MCF 10A (cell line): ENCODE measurements at regions of chr9 and their contacts with region 1.

Region 1: DNA sequence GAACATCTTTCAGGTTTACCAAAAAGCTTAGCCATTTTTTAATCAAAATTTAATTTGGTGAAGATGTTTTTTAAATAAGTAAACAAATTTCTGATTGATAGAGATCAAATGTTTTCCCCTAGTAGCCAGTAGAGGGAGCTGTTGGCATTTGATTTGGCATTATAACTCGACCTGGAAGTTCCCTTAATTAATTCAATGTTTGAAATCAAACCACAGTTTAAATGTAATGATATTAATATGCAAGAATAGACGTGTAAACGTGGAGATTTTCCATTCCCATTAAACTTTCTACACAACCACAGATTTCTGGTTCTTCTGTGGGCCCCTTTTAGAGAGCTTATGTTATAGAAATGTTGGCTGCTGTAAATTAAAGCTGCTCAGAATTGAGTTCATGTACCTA is 148.1 kb upstream of the MPDZ start:
- DNase-seq: peak; percentile 67
- H3K4me3 Mint-ChIP-seq: no peak overlapping the region
- H3K27ac Mint-ChIP-seq: no peak overlapping the region
- H3K4me1 Mint-ChIP-seq: no peaks in the 10 kb centered on the region
- H3K27me3 Mint-ChIP-seq: no peaks in the 10 kb centered on the region
- CTCF ChIP-seq: peak; percentile 69

Region 2: DNA sequence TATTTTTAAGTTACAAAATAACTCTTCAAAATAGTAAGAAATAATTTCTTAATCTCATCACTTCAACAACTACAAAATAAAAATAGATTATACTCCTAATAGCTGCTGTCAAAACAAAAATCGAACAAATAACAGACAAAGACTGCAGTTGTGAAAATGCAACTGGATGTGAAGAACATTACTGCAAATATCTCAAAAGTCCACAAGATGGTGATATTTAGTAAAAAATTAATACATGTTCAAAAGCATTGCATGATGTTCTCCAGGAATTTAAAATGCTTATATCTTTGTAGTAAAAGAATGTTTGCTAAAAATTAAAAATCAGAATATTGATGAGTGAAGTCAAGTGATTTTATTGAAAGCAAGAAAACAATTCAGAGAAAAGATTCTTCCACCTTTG is 214.2 kb before region 1 on chr9:
- CTCF ChIA-PET with region 1: no interaction called
- POLR2A ChIA-PET with region 1: no interaction called
- intact Hi-C with region 1: loop called (anchors 5 kb)
- DNase-seq: peak; percentile 5
- H3K4me3 Mint-ChIP-seq: no peak overlapping the region
- H3K27ac Mint-ChIP-seq: no peak overlapping the region
- H3K4me1 Mint-ChIP-seq: no peaks in the 10 kb centered on the region
- H3K27me3 Mint-ChIP-seq: no peaks in the 10 kb centered on the region
- CTCF ChIP-seq: peak; percentile 36

Region 3: GRCh38 chr9:13437866-13438265 is 10.3 kb after region 1 on chr9:
- CTCF ChIA-PET with region 1: interaction called, 35 read pairs
- POLR2A ChIA-PET with region 1: interaction called, 4 read pairs
- intact Hi-C with region 1: no loop called
- DNase-seq: no peak
- H3K4me3 Mint-ChIP-seq: no peak overlapping the region
- H3K27ac Mint-ChIP-seq: no peak overlapping the region
- H3K4me1 Mint-ChIP-seq: no peaks in the 10 kb centered on the region
- H3K27me3 Mint-ChIP-seq: no peaks in the 10 kb centered on the region
- CTCF ChIP-seq: no peak

Region 4: GRCh38 chr9:13586587-13587374 is 159.2 kb after region 1 on chr9:
- CTCF ChIA-PET with region 1: no interaction called
- POLR2A ChIA-PET with region 1: no interaction called
- intact Hi-C with region 1: no loop called
- DNase-seq: no peak
- H3K4me3 Mint-ChIP-seq: no peak overlapping the region
- H3K27ac Mint-ChIP-seq: no peak overlapping the region
- H3K4me1 Mint-ChIP-seq: no peaks in the 10 kb centered on the region
- H3K27me3 Mint-ChIP-seq: no peaks in the 10 kb centered on the region
- CTCF ChIP-seq: no peak

Region 5: DNA sequence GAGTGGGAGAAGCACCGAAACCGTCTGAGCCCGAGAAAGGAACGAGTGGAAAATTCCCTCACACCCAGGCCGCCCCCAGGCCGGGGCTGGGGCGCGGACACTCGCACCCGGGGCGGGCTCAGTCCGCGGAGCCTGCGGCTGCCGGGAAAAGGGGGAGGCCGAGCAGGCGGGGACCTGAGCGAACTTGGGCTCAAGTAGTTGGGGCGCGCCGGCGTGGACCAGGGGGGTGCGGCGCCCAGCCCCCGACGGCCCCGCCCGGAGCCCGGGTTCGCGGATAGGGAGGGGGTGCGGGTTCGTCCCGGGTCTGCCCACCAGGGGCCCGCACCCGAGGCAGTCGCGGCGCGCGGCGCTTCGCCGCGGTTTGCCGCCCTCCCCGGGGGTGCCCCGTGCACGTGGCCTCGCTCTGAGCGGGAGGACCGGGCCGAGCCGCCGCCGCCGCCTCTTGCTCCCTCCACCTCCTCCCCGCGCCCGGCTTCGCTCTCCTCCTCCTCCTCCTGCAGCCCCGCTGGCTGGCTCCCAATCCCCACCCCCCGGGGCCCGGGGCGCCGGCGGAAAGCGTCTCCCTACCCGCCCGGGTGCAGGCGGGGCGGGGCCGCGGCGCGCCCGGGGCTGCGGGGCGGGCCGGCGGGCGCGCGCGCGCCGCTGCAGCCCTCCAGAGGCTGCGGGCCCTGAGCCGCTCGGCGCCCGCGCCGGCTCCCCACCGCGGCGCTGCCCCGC is 887.5 kb after region 1 on chr9:
- CTCF ChIA-PET with region 1: interaction called, 4 read pairs
- POLR2A ChIA-PET with region 1: interaction called, 10 read pairs
- intact Hi-C with region 1: no loop called
- DNase-seq: peak; percentile 93
- H3K4me3 Mint-ChIP-seq: peak overlapping the region; percentile 80
- H3K27ac Mint-ChIP-seq: peak overlapping the region; percentile 88
- H3K4me1 Mint-ChIP-seq: peaks cover 40% of the 10 kb centered on the region
- H3K27me3 Mint-ChIP-seq: no peaks in the 10 kb centered on the region
- CTCF ChIP-seq: no peak

Region 6: DNA sequence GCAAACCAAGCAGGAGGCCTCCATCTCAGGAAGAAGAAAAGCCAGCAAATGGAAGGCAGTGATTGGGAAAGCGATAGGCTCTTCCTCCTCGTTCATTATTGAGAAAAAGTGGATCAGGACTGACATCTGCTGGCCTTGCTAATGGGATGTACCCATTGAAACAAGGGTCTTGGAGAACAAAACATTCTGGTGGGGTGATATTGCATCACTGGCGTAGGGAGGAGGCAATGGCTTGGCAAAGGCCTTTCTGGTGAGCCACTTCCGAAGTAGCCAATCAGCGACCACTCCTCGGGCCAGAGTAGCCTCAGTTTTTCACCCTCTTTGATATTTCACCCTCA is 973.0 kb after region 1 on chr9:
- CTCF ChIA-PET with region 1: interaction called, 5 read pairs
- POLR2A ChIA-PET with region 1: no interaction called
- intact Hi-C with region 1: loop called (anchors 1 kb)
- DNase-seq: peak; percentile 76
- H3K4me3 Mint-ChIP-seq: no peak overlapping the region
- H3K27ac Mint-ChIP-seq: no peak overlapping the region
- H3K4me1 Mint-ChIP-seq: peaks cover 11% of the 10 kb centered on the region
- H3K27me3 Mint-ChIP-seq: no peaks in the 10 kb centered on the region
- CTCF ChIP-seq: peak; percentile 48

Region 7: GRCh38 chr9:14441976-14442651 is 1014.5 kb after region 1 on chr9:
- CTCF ChIA-PET with region 1: interaction called, 15 read pairs
- POLR2A ChIA-PET with region 1: no interaction called
- intact Hi-C with region 1: no loop called
- DNase-seq: peak; percentile 22
- H3K4me3 Mint-ChIP-seq: no peak overlapping the region
- H3K27ac Mint-ChIP-seq: no peak overlapping the region
- H3K4me1 Mint-ChIP-seq: peaks cover 6% of the 10 kb centered on the region
- H3K27me3 Mint-ChIP-seq: peaks cover 41% of the 10 kb centered on the region
- CTCF ChIP-seq: peak; percentile 22